Dendritic cell treated with granulocyte-macrophage colony-stimulating factor and Interleukin-4, amounts not matched to agents 40 ng/mL and 50 ng/mL, for 4 days (primary cell): ENCODE measurements at regions of chr18 and their contacts with region 1.

Region 1: GRCh38 chr18:12883684-12884405 is at the start of gene PTPN2:
- H3K4me3 Mint-ChIP-seq: peak within 1 kb of the TSS; percentile 90
- H3K27ac Mint-ChIP-seq: peak within 1 kb of the TSS; percentile 89
- H3K4me1 Mint-ChIP-seq: peaks cover 40% of the 10 kb centered on the region
- H3K27me3 Mint-ChIP-seq: no peaks in the 10 kb centered on the region

Region 2: GRCh38 chr18:12838178-12838634 is 45.6 kb before region 1 on chr18:
- intact Hi-C with region 1: loop called (anchors 1 kb)
- H3K4me3 Mint-ChIP-seq: peak overlapping the region; percentile 58
- H3K27ac Mint-ChIP-seq: peak overlapping the region; percentile 97
- H3K4me1 Mint-ChIP-seq: peaks cover 69% of the 10 kb centered on the region
- H3K27me3 Mint-ChIP-seq: no peaks in the 10 kb centered on the region

Region 3: GRCh38 chr18:12867441-12868123 is 16.3 kb before region 1 on chr18:
- intact Hi-C with region 1: loop called (anchors 2 kb)
- H3K4me3 Mint-ChIP-seq: peak overlapping the region; percentile 33
- H3K27ac Mint-ChIP-seq: peak overlapping the region; percentile 80
- H3K4me1 Mint-ChIP-seq: peaks cover 56% of the 10 kb centered on the region
- H3K27me3 Mint-ChIP-seq: no peaks in the 10 kb centered on the region